ENCODE measurements at regions of chr5 and their contacts with region 1.

Region 1: DNA sequence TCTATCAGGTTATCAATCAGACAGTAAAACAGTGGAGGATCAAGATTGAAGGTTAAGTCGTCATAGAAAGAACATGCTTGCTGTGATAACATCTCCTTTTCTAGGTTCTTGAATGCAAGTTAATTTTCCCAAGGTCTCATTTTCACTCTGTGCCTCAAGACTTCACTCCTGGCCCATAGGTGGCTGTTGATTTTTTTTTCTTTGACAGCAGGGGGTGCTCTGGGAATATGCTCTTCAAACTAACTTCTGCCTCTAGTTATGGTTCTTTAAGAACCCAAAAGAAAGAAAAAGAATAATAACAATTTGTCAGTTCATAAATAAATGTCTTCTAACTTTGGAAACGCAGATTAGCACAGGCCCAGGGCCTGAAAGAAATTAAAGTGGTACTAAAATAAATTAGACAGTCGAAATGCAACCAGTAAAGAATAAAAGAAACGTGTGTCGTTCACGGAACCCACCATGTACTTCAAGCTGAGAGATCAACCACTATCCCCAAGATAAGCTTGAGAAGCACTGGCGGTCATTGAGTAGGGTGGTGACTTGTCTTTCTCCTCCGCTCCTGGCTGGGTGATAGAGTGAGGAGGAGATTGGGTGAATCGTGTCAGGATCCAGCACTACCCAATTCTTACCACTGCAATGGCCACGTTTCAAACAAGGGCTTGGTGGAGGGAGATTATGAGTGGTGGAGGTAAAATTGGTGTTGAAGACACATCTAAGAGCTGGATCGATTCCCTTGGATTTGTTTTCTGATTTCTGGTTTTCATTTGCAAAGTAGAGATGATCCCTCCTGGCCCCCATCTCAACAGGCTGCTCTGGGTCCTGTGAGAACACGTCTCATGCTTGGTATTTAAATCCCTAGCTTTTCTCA is 93.4 kb upstream of the IRX4 start:
- DNase-seq: peak; percentile 52
- H3K4me3 ChIP-seq: no peak overlapping the region
- H3K27ac ChIP-seq: peak overlapping the region; percentile 99
- H3K4me1 ChIP-seq: peaks cover 38% of the 10 kb centered on the region
- H3K27me3 ChIP-seq: no peaks in the 10 kb centered on the region
- CTCF ChIP-seq: peak; percentile 51 to 58

Region 2: DNA sequence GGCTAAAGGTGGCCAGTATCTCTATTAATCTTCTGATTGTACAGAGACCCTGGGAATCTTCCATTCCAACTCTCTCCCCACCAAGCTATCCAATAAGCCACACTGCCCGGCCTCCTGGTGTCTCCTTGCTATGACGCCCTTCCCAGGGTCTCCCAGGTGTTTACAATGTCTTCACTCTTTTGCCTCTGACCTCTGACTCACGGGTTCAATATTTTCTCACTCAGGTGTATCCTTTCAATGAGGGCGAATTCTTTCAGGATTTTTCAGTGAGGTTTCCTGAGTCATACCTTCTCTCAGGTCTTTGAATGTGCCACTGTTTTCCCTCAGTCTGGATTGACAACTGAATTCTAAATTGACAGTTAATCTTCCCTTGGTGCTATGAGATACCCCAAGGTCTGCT is 39.7 kb before region 1 on chr5:
- CTCF ChIA-PET with region 1: no interaction called
- dilution Hi-C with region 1: no loop called
- in situ Hi-C with region 1: no loop called
- intact Hi-C with region 1: loop called (anchors 2 kb)
- DNase-seq: peak; percentile 97
- H3K4me3 ChIP-seq: no peak overlapping the region
- H3K27ac ChIP-seq: peak overlapping the region; percentile 91
- H3K4me1 ChIP-seq: peaks cover 45% of the 10 kb centered on the region
- H3K27me3 ChIP-seq: no peaks in the 10 kb centered on the region
- CTCF ChIP-seq: no peak

Region 3: DNA sequence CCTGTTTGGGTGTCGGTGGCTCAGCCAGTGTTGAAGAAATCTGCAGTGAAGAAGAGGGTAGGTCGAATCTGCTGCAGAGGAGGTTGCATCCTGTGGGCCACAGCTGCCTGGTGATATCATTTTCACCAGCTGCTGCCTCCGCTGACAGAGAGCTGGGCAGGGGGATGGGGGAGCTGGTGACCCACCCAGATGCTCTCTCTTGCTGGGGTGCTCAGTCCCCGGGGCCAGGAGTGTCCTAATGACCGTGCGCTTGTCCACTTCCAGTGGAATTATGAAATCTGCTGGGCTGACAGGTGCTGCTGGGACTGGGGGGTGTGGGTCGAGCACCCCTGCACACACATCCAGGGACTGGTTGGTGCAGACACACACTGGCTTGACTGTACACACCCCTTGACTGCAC is 10.2 kb before region 1 on chr5:
- CTCF ChIA-PET with region 1: no interaction called
- dilution Hi-C with region 1: no loop called
- in situ Hi-C with region 1: no loop called
- intact Hi-C with region 1: no loop called
- DNase-seq: no peak
- H3K4me3 ChIP-seq: no peak overlapping the region
- H3K27ac ChIP-seq: no peak overlapping the region
- H3K4me1 ChIP-seq: peaks cover 34% of the 10 kb centered on the region
- H3K27me3 ChIP-seq: no peaks in the 10 kb centered on the region
- CTCF ChIP-seq: no peak

Region 4: GRCh38 chr5:2017540-2018389 is 41.6 kb after region 1 on chr5:
- CTCF ChIA-PET with region 1: no interaction called
- dilution Hi-C with region 1: no loop called
- in situ Hi-C with region 1: no loop called
- intact Hi-C with region 1: loop called (anchors 1 kb)
- DNase-seq: no peak
- H3K4me3 ChIP-seq: no peak overlapping the region
- H3K27ac ChIP-seq: no peak overlapping the region
- H3K4me1 ChIP-seq: peaks cover 13% of the 10 kb centered on the region
- H3K27me3 ChIP-seq: no peaks in the 10 kb centered on the region
- CTCF ChIP-seq: peak; percentile 60 to 67

Region 5: GRCh38 chr5:2739360-2740050 is 763.4 kb after region 1 on chr5:
- CTCF ChIA-PET with region 1: no interaction called
- dilution Hi-C with region 1: no loop called
- in situ Hi-C with region 1: no loop called
- intact Hi-C with region 1: loop called (anchors 5 kb)
- DNase-seq: peak; percentile 68
- H3K4me3 ChIP-seq: peak overlapping the region; percentile 58 to 64 (median 64)
- H3K27ac ChIP-seq: peak overlapping the region; percentile 49
- H3K4me1 ChIP-seq: peaks cover 30% of the 10 kb centered on the region
- H3K27me3 ChIP-seq: no peaks in the 10 kb centered on the region
- CTCF ChIP-seq: no peak